ENCODE measurements at regions of chr5 and their contacts with region 1.

Region 1: DNA sequence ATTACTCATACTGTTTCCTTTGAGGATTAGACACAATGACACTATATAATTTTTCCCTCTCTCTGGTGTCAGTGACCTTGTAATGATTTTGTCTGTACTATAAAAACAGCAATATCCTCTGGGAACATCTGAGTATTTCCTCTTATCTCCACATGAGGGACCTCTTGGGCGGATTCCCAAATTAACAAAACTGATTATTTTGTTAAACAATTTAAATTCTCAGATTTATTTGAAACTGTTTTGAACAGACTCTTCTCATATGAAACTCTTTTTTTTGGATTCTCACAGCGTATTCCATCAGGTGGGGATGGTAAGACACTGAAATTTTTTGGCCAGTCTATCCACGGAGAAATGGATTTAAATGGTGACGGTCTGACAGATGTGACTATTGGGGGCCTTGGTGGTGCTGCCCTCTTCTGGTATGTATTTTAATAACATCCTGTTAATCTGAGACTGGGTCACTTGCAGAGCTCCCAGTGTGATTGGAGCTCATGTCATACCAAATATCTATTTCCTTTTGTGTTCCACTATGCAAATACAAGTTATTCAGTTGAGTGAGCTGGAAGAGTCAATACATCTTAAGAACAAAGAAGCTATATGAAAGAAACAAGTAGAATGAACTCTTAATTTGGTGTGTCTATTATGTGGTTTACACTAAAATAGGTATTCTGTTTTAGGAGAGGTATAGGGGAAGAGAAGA is 73.8 kb upstream of the ITGA2 start:
- DNase-seq: no peak
- ATAC-seq: peak; percentile 92
- H3K4me3 ChIP-seq: no peak overlapping the region
- H3K27ac ChIP-seq: no peak overlapping the region
- H3K4me1 ChIP-seq: no peaks in the 10 kb centered on the region
- H3K27me3 ChIP-seq: no peaks in the 10 kb centered on the region

Region 2: GRCh38 chr5:52693280-52693679 is 222.0 kb before region 1 on chr5:
- intact Hi-C with region 1: loop called (anchors 5 kb)
- DNase-seq: peak in 1 of 2 donors; percentile 75
- ATAC-seq: peak; percentile 72
- H3K4me3 ChIP-seq: no peak overlapping the region
- H3K27ac ChIP-seq: no peak overlapping the region
- H3K4me1 ChIP-seq: peaks cover 0 to 11% of the 10 kb centered on the region in 2 donors
- H3K27me3 ChIP-seq: no peaks in the 10 kb centered on the region